Activated naive CD4-positive, alpha-beta T cell treated with anti-CD3 and anti-CD28 coated beads for 36 hours (primary cell): ENCODE measurements at regions of chr11 and their contacts with region 1.

Region 1: DNA sequence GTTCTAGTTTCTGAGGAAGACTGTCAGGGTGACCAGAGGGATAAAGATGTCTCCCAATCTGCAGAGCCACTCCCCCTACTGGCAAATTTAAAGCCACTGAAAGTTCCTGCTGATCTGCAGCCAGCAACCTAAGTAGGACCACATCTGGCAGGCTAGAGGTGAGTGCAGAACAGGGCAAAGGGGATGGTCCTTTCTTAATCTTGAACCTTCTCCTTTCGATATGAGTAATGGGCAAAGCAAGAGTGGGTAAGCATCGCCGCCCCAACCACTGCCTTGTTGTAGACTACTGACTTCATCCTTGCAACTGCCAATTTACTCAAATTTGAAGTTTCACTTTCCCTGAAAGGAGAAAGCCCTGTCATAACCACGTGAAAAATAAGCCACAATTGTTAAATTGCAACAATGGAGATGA is 30.7 kb downstream of the SCUBE2 start:
- DNase-seq: peak; percentile 89
- H3K4me3 Mint-ChIP-seq: no peak overlapping the region
- H3K27ac Mint-ChIP-seq: no peak overlapping the region
- H3K4me1 Mint-ChIP-seq: peaks cover 12% of the 10 kb centered on the region
- H3K27me3 Mint-ChIP-seq: peaks cover 13% of the 10 kb centered on the region

Region 2: GRCh38 chr11:8566613-8567210 is 494.0 kb before region 1 on chr11:
- CTCF ChIA-PET with region 1: no interaction called
- intact Hi-C with region 1: no loop called
- DNase-seq: no peak
- H3K4me3 Mint-ChIP-seq: no peak overlapping the region
- H3K27ac Mint-ChIP-seq: no peak overlapping the region
- H3K4me1 Mint-ChIP-seq: peaks cover 5% of the 10 kb centered on the region
- H3K27me3 Mint-ChIP-seq: peaks cover 21% of the 10 kb centered on the region

Region 3: DNA sequence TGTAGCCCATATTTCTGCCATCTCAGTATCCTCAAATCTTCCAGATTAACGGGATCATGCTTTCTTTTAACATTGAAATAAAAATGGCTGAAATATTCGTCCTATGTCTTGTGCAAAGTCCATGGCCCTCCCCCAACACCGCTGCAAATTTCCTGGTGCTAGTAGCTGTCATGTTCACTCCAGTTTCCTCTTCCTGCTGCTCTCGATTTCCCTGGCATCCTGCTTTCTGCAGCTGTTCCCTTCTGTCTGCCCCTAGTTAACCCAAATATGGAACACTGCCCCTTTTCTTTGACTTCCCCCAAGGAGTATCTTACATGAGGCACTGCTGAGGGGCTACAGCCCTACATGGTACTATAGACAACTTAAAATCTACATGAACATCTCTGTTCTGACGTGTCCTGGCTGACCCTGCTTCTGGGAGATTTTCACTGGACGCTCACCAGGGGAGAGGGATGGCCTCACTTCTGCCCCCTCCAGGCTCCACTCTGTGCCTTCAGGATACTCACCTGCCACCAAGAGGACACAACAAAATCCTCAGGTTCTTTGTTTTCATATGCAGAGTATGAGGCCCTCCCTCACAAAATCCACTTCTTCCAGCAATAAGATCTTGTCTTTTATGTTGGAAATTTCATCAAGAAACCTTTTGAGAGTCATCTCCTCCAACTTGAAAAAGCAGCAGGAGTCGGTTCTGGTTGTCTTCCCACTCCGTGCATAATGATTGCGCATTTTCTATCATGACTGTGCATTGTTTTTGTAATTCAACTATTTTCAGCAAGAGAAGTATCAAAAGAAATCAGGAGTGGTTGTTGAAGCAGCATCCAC is 60.2 kb after region 1 on chr11:
- CTCF ChIA-PET with region 1: no interaction called
- intact Hi-C with region 1: no loop called
- DNase-seq: no peak
- H3K4me3 Mint-ChIP-seq: no peak overlapping the region
- H3K27ac Mint-ChIP-seq: no peak overlapping the region
- H3K4me1 Mint-ChIP-seq: no peaks in the 10 kb centered on the region
- H3K27me3 Mint-ChIP-seq: no peaks in the 10 kb centered on the region

Region 4: DNA sequence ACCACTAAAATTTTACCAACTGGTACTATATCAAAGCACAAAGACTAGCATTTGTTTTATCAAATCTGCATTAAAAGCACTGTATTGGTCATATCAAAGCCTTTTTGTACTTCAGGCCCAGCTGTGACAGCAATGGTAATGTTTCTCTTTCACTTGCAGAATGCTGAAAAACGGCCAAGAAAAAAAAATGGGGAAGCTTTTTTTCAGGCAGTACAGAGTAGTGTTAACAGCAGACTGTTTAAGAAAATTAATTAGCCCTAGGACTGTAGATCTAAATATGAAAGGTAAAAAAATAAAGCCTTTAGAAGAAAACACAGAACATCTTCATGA is 171.1 kb after region 1 on chr11:
- CTCF ChIA-PET with region 1: no interaction called
- intact Hi-C with region 1: no loop called
- DNase-seq: peak; percentile 27
- H3K4me3 Mint-ChIP-seq: peak overlapping the region; percentile 68
- H3K27ac Mint-ChIP-seq: peak overlapping the region; percentile 56
- H3K4me1 Mint-ChIP-seq: peaks cover 58% of the 10 kb centered on the region
- H3K27me3 Mint-ChIP-seq: no peaks in the 10 kb centered on the region

Region 5: GRCh38 chr11:9565822-9566560 is 505.3 kb after region 1 on chr11:
- CTCF ChIA-PET with region 1: no interaction called
- intact Hi-C with region 1: loop called (anchors 1 kb)
- DNase-seq: peak; percentile 81
- H3K4me3 Mint-ChIP-seq: no peak overlapping the region
- H3K27ac Mint-ChIP-seq: peak overlapping the region; percentile 65
- H3K4me1 Mint-ChIP-seq: peaks cover 9% of the 10 kb centered on the region
- H3K27me3 Mint-ChIP-seq: no peaks in the 10 kb centered on the region